AG04449 (cell line): ENCODE measurements at regions of chr12 and their contacts with region 1.

Region 1: GRCh38 chr12:51270067-51270970 is at the start of gene SMAGP:
- DNase-seq: no peak
- H3K4me3 ChIP-seq: peak within 1 kb of the TSS; percentile 70
- CTCF ChIP-seq: no peak

Region 2: DNA sequence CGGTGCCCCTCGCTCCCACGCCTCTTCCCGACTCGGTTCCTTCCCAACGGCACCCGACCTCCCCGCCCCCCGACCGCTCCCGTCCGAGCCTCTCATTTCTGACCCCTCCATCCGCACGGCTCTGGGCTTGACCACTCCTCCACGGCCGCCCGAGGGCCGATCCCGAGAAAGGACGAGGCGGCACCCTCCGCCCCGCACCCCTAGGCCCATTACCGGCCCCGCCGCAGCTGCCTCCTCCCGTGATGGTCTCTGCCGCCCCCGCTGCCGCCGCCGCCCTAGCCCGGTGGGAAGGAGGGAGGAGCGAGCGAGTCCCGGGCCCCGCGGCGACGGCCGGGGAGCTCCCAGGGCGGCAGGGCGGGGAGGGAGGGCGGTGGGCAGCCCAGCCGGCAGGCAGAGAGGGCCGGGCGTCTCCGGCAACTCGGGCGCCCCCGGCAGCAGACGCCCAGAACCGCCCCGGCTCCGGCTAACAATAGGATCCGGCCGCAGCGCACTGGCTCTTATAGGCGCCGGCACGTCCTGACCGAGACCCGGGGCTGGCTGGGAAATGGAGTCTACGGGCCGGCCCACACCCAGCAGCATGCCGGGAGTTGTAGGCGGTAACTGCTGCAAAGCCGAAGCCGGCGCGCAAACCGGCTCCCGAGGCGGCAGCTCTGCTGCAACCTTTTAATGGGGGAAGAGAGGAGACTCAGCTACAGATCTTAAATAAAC is 187.0 kb before region 1 on chr12 and contains the start of gene CSRNP2:
- CTCF ChIA-PET with region 1: no interaction called
- POLR2A ChIA-PET with region 1: interaction called, 11 read pairs
- DNase-seq: peak; percentile 64
- H3K4me3 ChIP-seq: peak within 1 kb of the TSS; percentile 86
- CTCF ChIP-seq: no peak

Region 3: DNA sequence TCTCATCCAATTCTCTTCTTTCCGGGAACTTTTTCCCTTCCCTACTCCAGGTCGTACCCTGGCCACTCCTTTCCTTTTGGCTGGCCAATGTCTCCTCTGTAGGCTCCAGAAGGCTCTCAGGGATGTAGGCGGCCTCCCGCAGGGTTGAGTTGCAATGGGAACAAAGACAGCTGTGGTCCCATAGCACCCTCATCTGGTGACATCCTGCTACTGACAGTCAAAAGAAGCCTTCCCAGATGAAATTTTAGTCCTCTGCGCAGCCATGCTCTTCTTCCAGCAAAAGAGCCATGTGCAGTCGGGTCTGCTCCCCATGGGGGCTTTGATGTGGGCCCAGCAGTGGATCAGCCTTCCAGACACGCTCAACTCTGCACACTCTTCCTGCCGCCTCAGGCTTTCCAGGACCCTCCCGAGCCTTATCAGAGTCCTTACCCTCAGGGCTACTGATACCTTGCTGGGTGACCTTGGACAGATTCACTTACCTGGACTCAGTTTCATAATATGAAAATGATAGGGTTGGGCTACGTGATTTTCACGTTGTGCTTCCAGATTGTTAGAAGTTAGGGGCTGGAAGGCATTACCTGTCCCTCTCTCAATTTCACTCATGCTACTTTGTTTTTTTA is 81.7 kb after region 1 on chr12:
- CTCF ChIA-PET with region 1: interaction called, 20 read pairs
- POLR2A ChIA-PET with region 1: no interaction called
- DNase-seq: no peak
- H3K4me3 ChIP-seq: no peak overlapping the region
- CTCF ChIP-seq: peak; percentile 76